Activated naive CD8-positive, alpha-beta T cell treated with anti-CD3 and anti-CD28 coated beads, Interleukin-2, amount 10 ng/mL, durations not matched to agents 7 days and 5 days (primary cell): ENCODE measurements at regions of chr10 and their contacts with region 1.

Region 1: DNA sequence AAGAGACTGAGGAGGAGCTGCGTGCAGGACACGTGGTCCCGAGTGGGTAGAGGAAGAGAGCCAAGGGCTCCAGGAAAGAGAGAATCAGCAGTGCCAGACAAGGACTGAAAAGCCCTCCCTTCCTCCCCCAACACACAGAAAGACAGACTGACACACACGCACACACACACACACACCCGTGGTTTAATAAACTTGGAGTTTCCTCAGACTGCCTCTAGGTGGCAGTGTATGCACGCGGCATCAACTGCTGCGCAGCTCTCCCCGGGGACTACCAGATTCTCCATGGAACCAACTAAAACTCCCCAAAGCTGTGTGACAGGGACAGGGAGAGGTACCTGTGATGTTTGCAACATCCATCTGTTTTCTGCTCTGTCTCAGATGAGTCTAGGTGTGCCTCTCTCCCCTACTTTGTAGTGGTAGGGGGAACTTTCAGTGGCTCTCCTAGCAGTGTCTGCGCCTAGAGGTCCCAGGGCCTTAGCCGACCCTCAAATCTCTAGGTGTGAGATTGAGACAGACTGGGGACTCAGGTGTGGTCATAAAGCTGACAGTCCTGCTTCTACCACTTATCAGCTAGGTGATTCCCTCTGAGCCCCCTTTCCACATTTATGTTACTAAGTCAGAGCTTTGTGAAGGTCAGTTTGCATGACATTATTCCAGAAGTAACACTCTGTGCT is 9.3 kb upstream of the TSPAN14 start:
- DNase-seq: peak; percentile 69
- ATAC-seq: peak; percentile 76
- H3K4me3 Mint-ChIP-seq: peak overlapping the region; percentile 29
- H3K27ac Mint-ChIP-seq: peak overlapping the region; percentile 85
- H3K4me1 Mint-ChIP-seq: peaks cover 27% of the 10 kb centered on the region
- H3K27me3 Mint-ChIP-seq: peaks cover 12% of the 10 kb centered on the region

Region 2: DNA sequence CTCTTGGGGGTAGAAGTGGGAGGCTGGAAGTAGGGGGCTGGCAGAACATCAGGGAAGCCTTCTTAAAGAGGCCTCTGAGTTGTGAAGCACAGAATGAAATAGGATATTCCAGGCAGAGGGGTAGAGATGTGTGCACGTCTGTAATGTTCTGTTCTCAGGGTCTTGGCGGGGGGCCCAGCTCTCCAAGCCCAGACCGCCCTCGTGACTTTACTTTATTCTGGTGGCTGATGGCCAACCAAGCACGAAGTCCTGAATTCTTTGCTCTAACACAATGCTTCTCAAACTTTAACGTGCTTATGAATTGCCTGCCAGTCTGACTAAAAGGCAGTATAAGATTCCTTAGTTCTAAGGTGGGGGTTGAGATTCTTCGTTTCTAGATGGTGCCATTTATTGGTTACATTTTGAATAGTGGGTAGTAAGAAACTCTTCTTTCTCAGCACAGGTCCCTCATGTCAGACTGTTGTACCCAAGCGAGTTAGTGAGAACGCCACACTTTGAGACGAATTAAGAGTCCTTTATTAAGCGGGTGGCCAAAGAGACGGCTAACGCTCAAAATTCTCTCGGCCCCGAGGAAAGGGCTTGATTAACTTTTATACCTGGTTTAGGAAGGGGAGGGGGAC is 28.2 kb before region 1 on chr10:
- POLR2A ChIA-PET with region 1: no interaction called
- DNase-seq: no peak
- ATAC-seq: no peak
- H3K4me3 Mint-ChIP-seq: no peak overlapping the region
- H3K27ac Mint-ChIP-seq: no peak overlapping the region
- H3K4me1 Mint-ChIP-seq: peaks cover 17% of the 10 kb centered on the region
- H3K27me3 Mint-ChIP-seq: no peaks in the 10 kb centered on the region

Region 3: GRCh38 chr10:80504158-80504811 is 59.5 kb after region 1 on chr10:
- POLR2A ChIA-PET with region 1: interaction called, 30 read pairs
- DNase-seq: no peak
- ATAC-seq: no peak
- H3K4me3 Mint-ChIP-seq: no peak overlapping the region
- H3K27ac Mint-ChIP-seq: peak overlapping the region; percentile 81
- H3K4me1 Mint-ChIP-seq: peaks cover 62% of the 10 kb centered on the region
- H3K27me3 Mint-ChIP-seq: no peaks in the 10 kb centered on the region